ENCODE measurements at regions of chr3 and their contacts with region 1.

Region 1: GRCh38 chr3:46923559-46924350 is 46.2 kb downstream of the PTH1R start:
- DNase-seq: peak in 1 of 2 donors; percentile 70
- ATAC-seq: peak in 2 of 4 donors; percentile 30 to 58
- H3K4me3 ChIP-seq: no peak overlapping the region
- H3K27ac ChIP-seq: no peak overlapping the region
- H3K4me1 ChIP-seq: peaks cover 53% of the 10 kb centered on the region
- H3K27me3 ChIP-seq: no peaks in the 10 kb centered on the region
- CTCF ChIP-seq: peak; percentile 66

Region 2: GRCh38 chr3:46976326-46977190 is 52.8 kb after region 1 on chr3 and contains the start of gene CCDC12:
- intact Hi-C with region 1: loop called in 1 of 2 experiments (anchors 5 kb)
- DNase-seq: peak; percentile 94 to 97
- ATAC-seq: peak; percentile 85 to 88 (median 88)
- H3K4me3 ChIP-seq: peak within 1 kb of the TSS; percentile 92
- H3K27ac ChIP-seq: peak within 1 kb of the TSS; percentile 93
- H3K4me1 ChIP-seq: peaks cover 39% of the 10 kb centered on the region
- H3K27me3 ChIP-seq: no peaks in the 10 kb centered on the region
- CTCF ChIP-seq: no peak
- total RNA-seq, gene CCDC12: 25.1 to 36.4 (median 34.9) TPM

Region 3: DNA sequence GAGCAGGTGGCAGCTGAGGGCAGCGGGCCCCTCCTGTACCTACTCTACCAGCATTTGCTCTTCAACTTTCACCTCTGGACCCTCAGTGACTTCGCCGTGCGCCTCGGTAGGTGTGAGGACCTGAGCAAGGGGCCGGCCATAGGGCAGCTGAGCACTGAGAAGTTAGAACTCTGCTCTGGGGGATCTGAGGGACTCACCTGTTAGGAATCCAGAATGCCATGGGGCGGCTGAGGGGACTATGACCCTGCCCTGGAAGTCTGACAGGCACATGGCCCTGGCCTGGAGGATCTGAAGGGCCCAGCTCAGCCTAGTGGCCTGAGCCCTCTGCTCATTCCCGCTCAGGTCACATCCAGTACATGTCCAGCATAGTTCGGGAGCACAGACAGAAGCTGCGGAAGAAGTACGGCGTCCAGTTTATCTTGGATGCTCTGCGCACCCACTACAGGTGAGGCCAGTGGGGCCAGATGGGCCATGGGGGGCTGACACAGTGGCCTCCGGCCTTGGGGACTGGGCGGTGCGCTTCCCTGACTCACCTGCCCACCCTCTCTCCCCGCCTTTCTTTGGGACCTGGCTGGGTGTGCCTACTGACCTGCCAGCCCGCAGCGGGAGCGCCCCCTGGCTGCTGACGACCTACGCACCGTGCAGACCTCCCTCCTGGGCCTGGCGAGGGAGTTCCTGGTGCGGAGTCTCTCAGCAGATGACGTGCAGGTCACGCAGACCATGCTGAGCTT is 74.5 kb after region 1 on chr3:
- intact Hi-C with region 1: loop called (anchors 2 to 5 kb)
- DNase-seq: peak; percentile 77 to 90
- ATAC-seq: peak; percentile 83 to 95 (median 85)
- H3K4me3 ChIP-seq: no peak overlapping the region
- H3K27ac ChIP-seq: no peak overlapping the region
- H3K4me1 ChIP-seq: no peaks in the 10 kb centered on the region
- H3K27me3 ChIP-seq: no peaks in the 10 kb centered on the region
- CTCF ChIP-seq: peak; percentile 78

Region 4: DNA sequence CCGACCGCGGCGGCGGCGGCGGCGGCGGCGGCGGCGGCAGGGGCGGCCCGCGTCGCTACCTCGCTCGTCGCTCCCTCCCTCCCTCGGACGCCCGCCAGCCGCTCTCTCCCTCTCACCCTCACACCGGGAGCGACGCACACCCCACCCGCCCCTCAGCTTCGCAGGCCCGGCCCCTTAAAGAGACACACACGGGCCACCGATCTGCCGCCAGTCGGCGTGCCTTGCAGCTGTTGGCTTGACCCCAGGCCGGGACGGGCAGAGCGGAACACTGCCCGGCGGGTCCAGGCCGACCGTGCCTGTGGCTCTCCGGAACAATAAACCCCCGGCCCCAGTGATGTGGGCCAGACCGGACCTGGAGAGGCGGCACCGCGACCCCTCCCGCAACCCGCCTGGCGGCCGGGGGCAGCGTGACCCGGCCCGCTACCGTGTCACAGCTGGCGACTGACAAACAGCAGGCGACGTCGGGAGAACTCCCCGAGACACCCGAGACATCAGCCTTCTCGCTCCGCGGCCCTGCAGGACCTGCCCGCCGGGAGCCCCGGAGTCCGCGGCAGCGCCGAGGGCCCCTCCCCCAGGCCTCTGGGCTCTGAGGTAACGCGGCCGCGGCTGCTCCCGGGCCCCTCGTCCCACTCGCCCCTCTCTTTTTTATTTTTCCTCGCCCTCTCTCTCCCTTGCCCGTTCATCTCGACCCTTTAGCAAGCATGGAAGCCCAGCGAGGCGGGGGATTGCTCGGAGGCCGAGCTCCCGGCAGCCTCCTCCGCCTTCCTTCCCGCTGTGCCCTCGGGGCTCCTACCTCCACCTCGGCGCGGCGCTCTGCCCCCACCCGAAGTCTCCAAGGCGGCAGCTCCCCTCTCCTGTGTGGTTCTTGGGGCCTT is 240.5 kb after region 1 on chr3 and contains the start of gene SETD2:
- intact Hi-C with region 1: loop called in 1 of 2 experiments (anchors 10 kb)
- DNase-seq: peak; percentile 97 to 99
- ATAC-seq: peak; percentile 95 to 96 (median 96)
- H3K4me3 ChIP-seq: peak within 1 kb of the TSS; percentile 94
- H3K27ac ChIP-seq: peak within 1 kb of the TSS; percentile 96
- H3K4me1 ChIP-seq: peaks cover 45% of the 10 kb centered on the region
- H3K27me3 ChIP-seq: no peaks in the 10 kb centered on the region
- CTCF ChIP-seq: no peak
- total RNA-seq, gene SETD2: 33.7 to 38.1 (median 36.6) TPM